Naive thymus-derived CD4-positive, alpha-beta T cell (primary cell): ENCODE measurements at regions of chr4 and their contacts with region 1.

Region 1: DNA sequence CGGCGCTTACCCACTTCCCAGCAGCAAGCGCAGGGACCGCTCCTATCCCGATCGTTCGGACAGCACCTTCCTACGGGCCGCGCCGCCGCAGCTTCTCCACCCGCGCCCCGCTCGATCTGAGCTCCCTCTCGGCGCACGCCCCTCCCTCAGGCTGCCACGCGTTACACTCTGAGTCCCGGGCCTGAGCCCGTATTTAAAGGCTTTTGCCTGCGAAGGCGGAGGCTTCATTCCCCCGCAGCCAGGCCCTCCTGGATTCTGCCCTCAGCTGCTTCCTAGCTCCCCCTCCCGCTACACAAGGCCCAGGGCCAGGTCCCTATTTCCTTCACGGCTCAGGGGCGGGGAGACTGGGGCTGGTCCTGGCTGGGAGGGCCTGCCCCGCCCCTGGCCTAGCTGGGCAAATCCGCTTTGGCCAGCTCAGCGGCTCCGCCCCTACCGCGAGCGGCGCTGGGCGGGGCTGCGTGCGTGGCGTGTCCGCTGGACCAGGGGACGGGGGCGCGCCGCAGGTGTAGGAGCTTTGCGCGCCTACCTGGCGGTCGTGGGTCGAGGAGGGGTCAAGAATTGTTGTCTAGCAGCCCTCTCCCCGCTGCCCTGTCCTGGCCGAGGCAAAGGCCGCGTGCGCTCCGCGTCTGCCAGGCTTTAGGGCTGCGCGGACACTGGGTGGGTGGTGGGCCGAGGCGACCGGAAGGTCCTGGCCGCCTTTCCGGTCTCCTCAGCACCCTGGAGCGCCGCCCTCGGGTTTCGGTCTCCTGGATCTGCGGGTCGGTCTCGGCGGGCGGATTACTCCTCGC is at the start of gene UGDH:
- DNase-seq: peak; percentile 85 to 95 (median 88)
- ATAC-seq: peak; percentile 99
- H3K4me3 ChIP-seq: peak within 1 kb of the TSS; percentile 81
- H3K4me3 Mint-ChIP-seq: peak within 1 kb of the TSS; percentile 88 to 99 (median 98)
- H3K27ac ChIP-seq: peak within 1 kb of the TSS; percentile 74
- H3K27ac Mint-ChIP-seq: peak within 1 kb of the TSS; percentile 84 to 97 (median 93)
- H3K4me1 ChIP-seq: peaks cover 7 to 10% of the 10 kb centered on the region in 2 donors
- H3K4me1 Mint-ChIP-seq: peaks cover 11 to 26% (median 19%) of the 10 kb centered on the region in 7 donors
- H3K27me3 ChIP-seq: no peaks in the 10 kb centered on the region
- H3K27me3 Mint-ChIP-seq: no peaks in the 10 kb centered on the region
- total RNA-seq, gene UGDH: 6.9 to 20.9 (median 17.7) TPM

Region 2: DNA sequence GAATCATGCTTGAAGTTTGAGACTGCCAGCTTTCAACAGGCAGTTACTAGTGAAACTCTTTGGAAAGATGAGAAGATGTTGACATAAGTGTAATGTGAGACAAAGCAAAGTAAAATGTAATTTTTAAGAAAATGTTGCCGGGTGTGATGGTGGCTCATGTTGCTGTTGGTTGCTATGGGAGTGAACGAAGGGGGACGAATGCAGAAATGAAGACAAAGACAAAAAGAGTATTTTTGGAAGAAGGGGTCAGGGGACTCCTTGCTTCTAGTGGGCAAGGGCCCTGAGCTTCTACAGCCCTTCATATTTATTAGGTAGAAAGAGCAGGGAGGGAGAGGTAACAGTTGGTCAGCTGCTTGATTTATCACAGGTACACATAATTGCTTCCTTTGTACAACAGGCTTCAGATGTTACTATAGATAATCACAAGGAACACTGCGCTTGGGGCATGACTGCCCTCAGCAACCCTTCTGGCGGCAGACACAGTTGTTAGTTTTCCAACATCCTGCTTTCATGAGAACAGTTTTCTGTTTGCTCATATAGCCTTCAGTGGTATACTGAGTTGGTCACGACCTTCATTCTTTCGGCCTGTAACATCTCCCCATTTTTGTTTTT is 11.7 kb after region 1 on chr4:
- CTCF ChIA-PET with region 1: no interaction called
- POLR2A ChIA-PET with region 1: no interaction called
- intact Hi-C with region 1: loop called in 1 of 2 experiments (anchors 1 kb)
- DNase-seq: no peak
- ATAC-seq: no peak
- H3K4me3 ChIP-seq: no peak overlapping the region
- H3K4me3 Mint-ChIP-seq: no peak overlapping the region
- H3K27ac ChIP-seq: no peak overlapping the region
- H3K27ac Mint-ChIP-seq: no peak overlapping the region
- H3K4me1 ChIP-seq: no peaks in the 10 kb centered on the region
- H3K4me1 Mint-ChIP-seq: no peaks in the 10 kb centered on the region
- H3K27me3 ChIP-seq: no peaks in the 10 kb centered on the region
- H3K27me3 Mint-ChIP-seq: no peaks in the 10 kb centered on the region

Region 3: GRCh38 chr4:39565878-39566600 is 38.6 kb after region 1 on chr4:
- CTCF ChIA-PET with region 1: no interaction called
- POLR2A ChIA-PET with region 1: no interaction called
- intact Hi-C with region 1: no loop called
- DNase-seq: no peak
- ATAC-seq: no peak
- H3K4me3 ChIP-seq: no peak overlapping the region
- H3K4me3 Mint-ChIP-seq: no peak overlapping the region
- H3K27ac ChIP-seq: no peak overlapping the region
- H3K27ac Mint-ChIP-seq: peak overlapping the region in 1 of 9 donors; percentile 41
- H3K4me1 ChIP-seq: no peaks in the 10 kb centered on the region
- H3K4me1 Mint-ChIP-seq: peaks cover 0 to 4% (median 0%) of the 10 kb centered on the region in 7 donors
- H3K27me3 ChIP-seq: no peaks in the 10 kb centered on the region
- H3K27me3 Mint-ChIP-seq: no peaks in the 10 kb centered on the region

Region 4: GRCh38 chr4:39638354-39639240 is 111.1 kb after region 1 on chr4 and contains the start of gene SMIM14:
- CTCF ChIA-PET with region 1: no interaction called
- POLR2A ChIA-PET with region 1: interaction called, 10 read pairs
- intact Hi-C with region 1: loop called (anchors 1 kb)
- DNase-seq: peak; percentile 69 to 96 (median 82)
- ATAC-seq: peak; percentile 92
- H3K4me3 ChIP-seq: peak within 1 kb of the TSS; percentile 77
- H3K4me3 Mint-ChIP-seq: peak within 1 kb of the TSS; percentile 86 to 97 (median 94)
- H3K27ac ChIP-seq: peak within 1 kb of the TSS; percentile 79
- H3K27ac Mint-ChIP-seq: peak within 1 kb of the TSS; percentile 67 to 96 (median 86)
- H3K4me1 ChIP-seq: peaks cover 12 to 13% of the 10 kb centered on the region in 2 donors
- H3K4me1 Mint-ChIP-seq: peaks cover 22 to 51% (median 44%) of the 10 kb centered on the region in 7 donors
- H3K27me3 ChIP-seq: no peaks in the 10 kb centered on the region
- H3K27me3 Mint-ChIP-seq: peaks cover 0 to 27% (median 0%) of the 10 kb centered on the region in 5 donors
- total RNA-seq, gene SMIM14: 4.6 to 15.1 (median 12.9) TPM